ENCODE measurements at regions of chr18 and their contacts with region 1.

Region 1: DNA sequence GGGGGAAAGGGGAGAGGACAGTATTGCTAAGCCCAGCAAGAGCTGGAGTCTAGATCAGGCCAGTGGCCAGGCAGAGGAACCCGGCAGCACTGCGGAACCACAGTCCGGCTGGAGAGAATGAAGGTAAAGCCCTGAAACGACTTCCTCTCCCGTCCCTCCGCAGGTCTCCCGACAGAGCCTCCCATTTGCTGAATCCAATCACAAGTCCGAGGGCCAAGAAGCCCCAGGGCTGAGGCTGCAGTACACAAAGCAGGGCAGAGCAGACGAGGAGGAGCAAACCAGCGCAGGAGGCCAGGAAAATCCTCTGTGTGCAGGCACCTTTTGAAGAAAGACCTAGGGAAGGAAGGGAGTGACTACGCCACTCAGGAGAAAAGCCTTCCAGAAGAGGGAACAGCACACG is 104.4 kb downstream of the OSBPL1A start:
- DNase-seq: no peak
- ATAC-seq: no peak
- H3K4me3 ChIP-seq: no peak overlapping the region
- H3K27ac ChIP-seq: no peak overlapping the region
- H3K4me1 ChIP-seq: no peaks in the 10 kb centered on the region
- H3K27me3 ChIP-seq: no peaks in the 10 kb centered on the region
- CTCF ChIP-seq: no peak
- POLR2A ChIP-seq: no peak
- RAD21 ChIP-seq: no peak

Region 2: DNA sequence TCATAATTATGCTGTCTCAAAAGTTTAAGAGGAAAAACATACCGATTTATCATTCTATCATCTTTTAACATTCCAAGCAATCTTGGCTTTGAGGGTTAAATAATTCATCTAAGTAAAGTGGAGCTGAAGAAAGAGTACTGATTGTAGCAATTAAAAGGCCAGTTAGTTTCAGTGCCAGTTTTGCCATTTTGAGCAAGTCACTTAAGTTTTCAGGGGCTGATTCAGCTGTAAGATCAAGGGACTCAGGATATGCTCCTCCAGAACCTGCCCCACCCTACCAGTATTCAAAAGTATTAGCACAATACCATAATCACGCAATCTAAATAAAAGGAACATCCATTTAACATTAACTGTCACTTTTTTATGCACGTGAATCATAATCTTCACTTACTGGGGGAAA is 1795.2 kb after region 1 on chr18:
- CTCF ChIA-PET with region 1: no interaction called
- POLR2A ChIA-PET with region 1: interaction called, 13 read pairs
- dilution Hi-C with region 1: no loop called
- in situ Hi-C with region 1: no loop called
- intact Hi-C with region 1: no loop called
- DNase-seq: no peak
- ATAC-seq: no peak
- H3K4me3 ChIP-seq: peak overlapping the region; percentile 5
- H3K27ac ChIP-seq: no peak overlapping the region
- H3K4me1 ChIP-seq: no peaks in the 10 kb centered on the region; the same call in 1 of the 2 replicates
- H3K27me3 ChIP-seq: no peaks in the 10 kb centered on the region
- CTCF ChIP-seq: no peak
- POLR2A ChIP-seq: no peak
- RAD21 ChIP-seq: no peak